ENCODE measurements at regions of chr1 and their contacts with region 1.

Region 1: DNA sequence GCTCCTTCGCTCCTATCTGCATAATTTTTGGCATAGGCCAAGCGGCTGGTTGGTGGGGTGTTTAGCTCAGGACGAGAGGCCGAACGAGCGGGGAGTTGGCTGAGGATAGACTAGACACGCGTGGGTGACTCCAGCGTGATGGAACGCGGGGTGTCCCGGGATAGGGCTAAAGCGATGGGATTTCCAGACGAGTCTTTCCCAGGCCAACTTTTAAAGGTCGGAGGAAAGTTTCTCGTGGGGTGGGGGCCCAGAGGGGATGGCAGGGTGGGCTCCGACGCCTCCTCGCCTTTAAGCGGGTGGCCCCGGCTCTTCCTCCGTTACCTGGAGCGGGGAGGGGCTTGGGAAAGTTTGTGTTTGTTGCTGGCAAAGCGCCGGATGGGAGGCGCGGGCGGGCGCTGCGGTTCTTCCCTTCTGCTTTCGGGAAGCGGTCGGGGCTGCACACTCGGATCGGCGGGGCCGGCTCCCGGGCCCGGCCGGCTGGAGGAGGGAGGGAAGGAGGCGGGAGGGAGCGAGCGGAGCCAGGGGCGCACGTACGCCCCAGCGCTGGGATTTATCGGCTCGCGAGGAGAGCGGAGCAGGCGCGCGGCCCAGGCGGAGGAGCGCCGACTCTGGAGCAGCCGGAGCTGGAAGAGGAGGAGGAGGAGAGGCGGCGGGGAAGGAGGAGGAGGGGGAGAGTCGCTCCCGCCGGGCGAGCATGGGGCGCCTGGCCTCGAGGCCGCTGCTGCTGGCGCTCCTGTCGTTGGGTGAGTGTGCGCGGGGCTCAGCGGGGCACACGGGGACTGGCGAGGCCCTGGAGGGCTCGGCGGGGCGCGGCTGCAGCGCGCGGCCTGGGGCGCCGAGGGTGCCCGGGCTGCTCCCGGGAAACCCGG is at the start of gene PTGFRN:
- DNase-seq: peak; percentile 73 to 78
- ATAC-seq: peak; percentile 67 to 85 (median 77)
- H3K4me3 ChIP-seq: peak within 1 kb of the TSS; percentile 64 to 86 (median 78)
- H3K27ac ChIP-seq: peak within 1 kb of the TSS; percentile 66 to 97 (median 92)
- H3K4me1 ChIP-seq: peaks cover 4 to 49% (median 30%) of the 10 kb centered on the region in 9 donors
- H3K27me3 ChIP-seq: peaks cover 0 to 38% (median 0%) of the 10 kb centered on the region in 7 donors
- CTCF ChIP-seq: no peak
- total RNA-seq, gene PTGFRN: 76.8 to 318 (median 178) TPM

Region 2: GRCh38 chr1:116826818-116827606 is 82.7 kb before region 1 on chr1:
- intact Hi-C with region 1: no loop called
- DNase-seq: no peak
- ATAC-seq: no peak
- H3K4me3 ChIP-seq: no peak overlapping the region
- H3K27ac ChIP-seq: no peak overlapping the region
- H3K4me1 ChIP-seq: peaks cover 7 to 24% (median 14%) of the 10 kb centered on the region in 9 donors
- H3K27me3 ChIP-seq: no peaks in the 10 kb centered on the region
- CTCF ChIP-seq: no peak

Region 3: DNA sequence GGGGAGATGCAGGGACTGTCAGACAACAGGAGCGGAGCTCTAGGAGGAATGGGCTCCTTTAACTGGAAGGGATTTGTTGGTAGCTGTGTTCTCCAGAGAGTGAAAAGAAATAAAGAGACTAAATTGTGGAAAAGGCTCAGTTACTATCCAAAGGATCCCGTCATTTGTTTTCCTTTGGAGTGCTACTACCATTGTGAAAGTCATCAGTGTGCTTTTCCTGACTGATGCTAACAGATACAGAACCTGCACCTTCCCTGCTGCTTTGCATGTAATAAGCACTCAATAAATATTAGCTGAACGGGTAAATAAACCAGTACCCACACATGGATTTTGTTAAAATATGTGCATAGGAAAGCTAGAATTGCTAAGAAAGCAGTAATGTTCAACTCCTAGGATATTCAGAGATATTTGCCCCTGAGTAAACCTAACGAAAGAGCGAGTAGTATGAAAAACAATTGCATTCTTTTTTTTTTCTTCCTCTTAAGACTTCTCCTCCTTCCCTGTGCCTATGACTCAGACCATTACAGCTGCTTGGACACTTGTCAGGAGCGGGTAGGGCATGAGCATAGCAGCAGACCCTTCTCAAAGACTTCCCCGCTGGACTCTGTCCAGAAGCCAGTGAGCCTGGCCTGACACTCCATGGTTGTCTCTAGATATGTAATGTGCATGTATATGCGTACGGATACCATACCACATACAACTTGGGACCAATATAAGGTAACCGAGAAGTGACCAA is 41.6 kb after region 1 on chr1:
- intact Hi-C with region 1: loop called in 2 of 10 experiments (anchors 5 kb)
- DNase-seq: peak in 1 of 2 donors; percentile 28
- ATAC-seq: peak in 6 of 8 donors; percentile 11 to 53 (median 35)
- H3K4me3 ChIP-seq: peak overlapping the region in 5 of 10 donors; percentile 0 to 20 (median 6)
- H3K27ac ChIP-seq: peak overlapping the region; percentile 55 to 89 (median 70)
- H3K4me1 ChIP-seq: peaks cover 0 to 87% (median 61%) of the 10 kb centered on the region in 9 donors
- H3K27me3 ChIP-seq: no peaks in the 10 kb centered on the region
- CTCF ChIP-seq: no peak

Region 4: DNA sequence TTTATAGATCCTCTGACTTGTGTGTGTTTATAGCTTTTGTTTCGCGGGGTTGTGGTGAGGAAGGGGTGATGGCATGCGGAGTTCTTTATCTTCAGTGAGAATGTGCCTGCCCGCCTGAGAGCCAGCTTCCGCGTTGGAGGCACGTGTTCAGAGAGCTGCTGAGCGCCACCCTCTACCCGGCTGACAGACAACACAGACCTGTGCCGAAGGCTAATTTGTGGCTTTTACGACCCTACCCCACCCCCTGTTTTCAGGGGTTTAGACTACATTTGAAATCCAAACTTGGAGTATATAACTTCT is 77.5 kb after region 1 on chr1:
- intact Hi-C with region 1: loop called in 4 of 10 experiments (anchors 5 to 10 kb)
- DNase-seq: no peak
- ATAC-seq: no peak
- H3K4me3 ChIP-seq: peak overlapping the region in 1 of 10 donors; percentile 8
- H3K27ac ChIP-seq: peak overlapping the region in 3 of 10 donors; percentile 23 to 85 (median 71)
- H3K4me1 ChIP-seq: peaks cover 0 to 72% (median 56%) of the 10 kb centered on the region in 9 donors
- H3K27me3 ChIP-seq: no peaks in the 10 kb centered on the region
- CTCF ChIP-seq: no peak

Region 5: DNA sequence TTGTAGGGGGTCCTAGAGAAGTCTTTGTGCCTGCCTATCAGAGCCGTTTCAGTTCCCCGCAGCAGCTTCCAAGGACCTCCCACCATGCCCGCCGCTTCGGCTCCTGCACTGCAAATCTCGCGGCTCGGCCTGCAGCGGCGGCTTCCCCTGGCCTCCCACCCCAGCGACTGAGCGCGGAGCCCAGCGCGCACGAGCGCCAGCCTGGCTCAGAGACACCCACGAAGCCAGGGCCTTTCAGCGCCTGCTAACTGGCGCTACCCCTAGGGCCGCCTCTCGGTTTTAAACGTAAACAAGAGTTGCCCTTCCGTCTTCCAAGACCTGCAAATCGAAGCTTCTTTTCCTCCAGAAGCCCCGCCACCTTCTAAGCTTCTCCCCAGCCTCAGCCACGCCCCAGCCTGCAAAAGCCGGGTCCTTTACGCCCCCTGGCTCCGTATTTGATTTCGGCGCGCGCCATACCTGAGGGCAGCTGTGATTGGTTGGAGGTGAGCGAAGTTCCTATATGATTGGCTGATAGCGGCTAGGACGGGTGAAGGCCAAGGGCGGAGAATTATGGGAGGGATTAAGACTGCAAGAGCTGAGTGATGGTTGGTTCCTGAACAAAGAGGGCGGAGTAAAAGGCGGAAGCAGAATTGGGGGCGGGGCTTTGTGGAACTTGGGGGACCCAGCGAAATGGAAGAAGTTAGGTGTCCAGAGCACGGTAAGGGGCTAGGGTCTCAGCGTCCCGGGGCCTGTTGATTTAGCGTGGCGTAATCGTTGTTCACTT is 150.1 kb after region 1 on chr1 and contains the start of gene TTF2:
- intact Hi-C with region 1: loop called in 1 of 10 experiments (anchors 10 kb)
- DNase-seq: peak; percentile 82 to 97
- ATAC-seq: peak; percentile 99 to 100 (median 99)
- H3K4me3 ChIP-seq: peak within 1 kb of the TSS; percentile 57 to 88 (median 78)
- H3K27ac ChIP-seq: peak within 1 kb of the TSS in 8 of 10 donors; percentile 7 to 82 (median 64)
- H3K4me1 ChIP-seq: peaks cover 0 to 25% (median 9%) of the 10 kb centered on the region in 9 donors
- H3K27me3 ChIP-seq: no peaks in the 10 kb centered on the region
- CTCF ChIP-seq: peak in 7 of 9 donors; percentile 15 to 57 (median 30)
- total RNA-seq, gene TTF2: 5.0 to 19.0 (median 10.4) TPM

Measured in heart right ventricle (tissue), 16 donors.